Dendritic cell treated with granulocyte-macrophage colony-stimulating factor and Interleukin-4, amounts not matched to agents 40 ng/mL and 50 ng/mL, for 4 days (primary cell): ENCODE measurements at regions of chr14 and their contacts with region 1.

Region 1: GRCh38 chr14:35285168-35286002 is 6.8 kb upstream of the PSMA6 start:
- H3K4me3 Mint-ChIP-seq: peak overlapping the region; percentile 30
- H3K27ac Mint-ChIP-seq: peak overlapping the region; percentile 78
- H3K4me1 Mint-ChIP-seq: peaks cover 55% of the 10 kb centered on the region
- H3K27me3 Mint-ChIP-seq: no peaks in the 10 kb centered on the region

Region 2: DNA sequence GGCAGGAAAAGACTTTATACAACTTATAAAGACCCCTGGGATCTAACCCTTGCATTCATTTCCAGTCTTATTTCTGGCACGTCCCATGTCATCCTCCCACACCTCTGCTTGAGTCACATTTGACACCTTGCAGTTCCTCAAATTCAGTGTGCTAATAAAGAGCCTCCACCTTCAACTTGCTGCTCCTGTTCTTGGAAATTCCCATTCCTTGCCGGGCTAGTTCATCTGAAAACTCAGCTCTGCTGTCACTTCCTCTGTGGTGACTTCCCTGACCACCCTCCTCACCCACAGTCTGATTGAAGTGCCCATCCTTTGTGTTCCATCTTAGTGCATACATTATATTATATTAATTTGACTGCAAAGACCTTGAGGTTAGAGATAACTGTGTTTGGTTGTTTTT is 30.6 kb before region 1 on chr14:
- intact Hi-C with region 1: loop called (anchors 5 kb)
- H3K4me3 Mint-ChIP-seq: no peak overlapping the region
- H3K27ac Mint-ChIP-seq: peak overlapping the region; percentile 62
- H3K4me1 Mint-ChIP-seq: peaks cover 45% of the 10 kb centered on the region
- H3K27me3 Mint-ChIP-seq: no peaks in the 10 kb centered on the region

Region 3: GRCh38 chr14:35539969-35540368 is 254.6 kb after region 1 on chr14:
- intact Hi-C with region 1: no loop called
- H3K4me3 Mint-ChIP-seq: no peak overlapping the region
- H3K27ac Mint-ChIP-seq: no peak overlapping the region
- H3K4me1 Mint-ChIP-seq: peaks cover 13% of the 10 kb centered on the region
- H3K27me3 Mint-ChIP-seq: peaks cover 21% of the 10 kb centered on the region